Activated CD4-positive, alpha-beta T cell treated with anti-CD3 and anti-CD28 coated beads for 36 hours (primary cell): ENCODE measurements at regions of chr1 and their contacts with region 1.

Region 1: GRCh38 chr1:147509786-147510395 is 31.4 kb upstream of the BCL9 start:
- DNase-seq: no peak
- ATAC-seq: no peak
- H3K4me3 Mint-ChIP-seq: no peak overlapping the region
- H3K27ac Mint-ChIP-seq: no peak overlapping the region
- H3K4me1 Mint-ChIP-seq: no peaks in the 10 kb centered on the region
- H3K27me3 Mint-ChIP-seq: no peaks in the 10 kb centered on the region

Region 2: DNA sequence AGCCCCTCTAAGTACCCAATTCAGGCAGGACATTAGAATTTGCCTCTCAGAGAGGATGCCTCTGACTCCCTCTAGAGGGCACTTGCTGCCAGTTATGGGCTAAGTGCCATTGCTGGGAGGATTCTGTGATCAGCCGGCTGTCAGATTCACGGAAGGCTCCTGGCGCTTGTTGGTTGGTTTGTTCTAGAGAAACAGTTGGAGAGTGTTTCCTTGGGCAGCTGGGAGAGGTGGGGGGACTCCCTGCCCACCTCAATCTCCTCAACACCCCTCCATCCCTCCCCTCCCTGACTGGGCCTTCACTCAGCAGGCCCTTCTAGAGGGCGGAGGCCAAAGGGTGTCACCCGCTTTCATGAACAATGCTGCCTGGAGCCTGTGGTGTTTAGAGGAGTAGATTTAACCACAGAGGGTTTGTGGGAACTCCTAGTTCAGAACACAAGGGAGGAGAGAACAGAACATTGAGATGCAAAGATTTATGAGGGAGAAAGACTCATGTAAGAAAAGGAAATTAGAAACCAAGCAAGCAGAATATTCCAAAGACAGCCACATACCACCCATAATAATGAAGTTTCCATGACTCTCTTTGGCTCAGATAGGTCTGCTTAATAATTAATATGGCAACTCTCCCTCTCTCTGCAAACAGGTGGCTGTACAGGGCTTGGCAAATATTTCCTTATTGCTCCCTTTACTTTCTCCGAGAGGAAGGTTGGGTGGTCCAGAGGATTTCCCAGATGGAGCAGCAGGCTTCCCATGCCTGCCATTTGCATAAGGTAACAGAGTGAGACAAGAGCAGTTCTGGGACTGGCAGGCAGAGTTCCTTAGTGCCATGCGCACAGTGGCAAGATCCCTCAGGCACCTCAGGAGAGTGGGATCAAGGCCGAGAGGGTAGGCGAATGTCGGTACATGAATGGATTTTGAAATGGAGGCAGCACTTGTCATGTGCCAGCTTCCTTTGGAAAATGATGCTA is 190.4 kb after region 1 on chr1:
- CTCF ChIA-PET with region 1: interaction called, 3 read pairs
- POLR2A ChIA-PET with region 1: no interaction called
- intact Hi-C with region 1: loop called in 1 of 2 experiments (anchors 5 kb)
- DNase-seq: peak; percentile 74
- ATAC-seq: peak; percentile 97
- H3K4me3 Mint-ChIP-seq: no peak overlapping the region
- H3K27ac Mint-ChIP-seq: peak overlapping the region; percentile 66
- H3K4me1 Mint-ChIP-seq: peaks cover 10% of the 10 kb centered on the region
- H3K27me3 Mint-ChIP-seq: peaks cover 2% of the 10 kb centered on the region